ENCODE measurements at regions of chr3 and their contacts with region 1.

Region 1: DNA sequence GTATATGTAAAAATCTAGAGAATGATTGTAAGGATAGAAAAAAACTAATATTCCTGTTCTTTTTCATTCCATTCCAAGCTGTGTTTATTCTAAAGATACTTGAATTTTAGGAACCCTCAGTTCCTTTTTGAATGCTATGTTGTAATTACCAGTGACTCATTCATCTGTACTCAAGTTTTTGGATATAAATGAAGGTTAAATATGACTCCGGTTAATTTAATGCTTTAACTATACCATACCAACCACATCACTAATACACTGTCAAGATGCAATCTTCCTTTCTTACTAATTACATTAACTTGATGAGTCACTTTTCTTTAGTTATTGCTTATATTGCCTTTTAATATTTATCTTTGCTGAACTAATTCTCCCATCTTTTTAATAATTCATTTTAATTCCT is 68.8 kb upstream of the ZNF148 start:
- DNase-seq: no peak
- H3K4me3 ChIP-seq: no peak overlapping the region
- H3K4me3 Mint-ChIP-seq: no peak overlapping the region
- H3K27ac Mint-ChIP-seq: no peak overlapping the region
- H3K4me1 ChIP-seq: peaks cover 22% of the 10 kb centered on the region
- H3K4me1 Mint-ChIP-seq: peaks cover 5% of the 10 kb centered on the region
- H3K27me3 ChIP-seq: no peaks in the 10 kb centered on the region
- H3K27me3 Mint-ChIP-seq: no peaks in the 10 kb centered on the region
- CTCF ChIP-seq: no peak

Region 2: DNA sequence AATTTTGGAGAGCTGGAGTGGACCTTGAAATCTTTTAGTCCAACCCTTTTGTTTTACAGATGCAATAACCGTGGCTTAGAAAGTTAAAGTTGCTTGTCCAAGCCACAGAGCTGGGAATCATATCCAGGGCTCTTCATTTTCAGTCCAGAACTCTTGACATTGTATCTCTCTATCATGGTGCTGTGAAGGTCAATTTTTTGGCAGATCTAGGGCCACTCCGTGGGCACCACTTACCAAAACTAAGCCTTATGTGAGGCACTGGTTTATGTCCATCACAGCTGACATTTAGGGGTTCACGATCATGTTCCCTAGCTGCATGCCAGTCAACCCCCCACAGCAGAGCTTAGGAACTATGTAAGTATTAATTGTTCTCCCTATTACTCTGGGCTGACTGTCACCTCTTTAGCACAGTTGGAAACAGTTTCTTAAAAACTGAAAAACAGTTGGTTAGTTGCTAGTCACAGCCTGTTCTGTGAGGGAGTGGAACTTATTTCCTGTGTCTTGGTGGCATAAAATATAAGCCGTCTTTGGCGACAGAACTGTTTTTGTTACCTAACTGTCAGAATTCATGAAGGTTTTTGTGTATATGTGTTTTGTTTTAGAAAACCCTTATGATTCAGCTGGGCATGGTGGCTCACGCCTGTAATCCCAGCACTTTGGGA is 903.2 kb before region 1 on chr3:
- CTCF ChIA-PET with region 1: no interaction called
- POLR2A ChIA-PET with region 1: no interaction called
- intact Hi-C with region 1: no loop called
- DNase-seq: no peak
- H3K4me3 ChIP-seq: no peak overlapping the region
- H3K4me3 Mint-ChIP-seq: no peak overlapping the region
- H3K27ac Mint-ChIP-seq: no peak overlapping the region
- H3K4me1 ChIP-seq: no peaks in the 10 kb centered on the region
- H3K4me1 Mint-ChIP-seq: no peaks in the 10 kb centered on the region
- H3K27me3 ChIP-seq: no peaks in the 10 kb centered on the region
- H3K27me3 Mint-ChIP-seq: peaks cover 4% of the 10 kb centered on the region
- CTCF ChIP-seq: no peak

Region 3: GRCh38 chr3:125374996-125375941 is 68.7 kb before region 1 on chr3 and contains the start of gene ZNF148:
- CTCF ChIA-PET with region 1: no interaction called
- POLR2A ChIA-PET with region 1: interaction called, 5 read pairs
- intact Hi-C with region 1: loop called (anchors 5 kb)
- DNase-seq: peak; percentile 89 to 92
- H3K4me3 ChIP-seq: peak within 1 kb of the TSS; percentile 95
- H3K4me3 Mint-ChIP-seq: peak within 1 kb of the TSS; percentile 100
- H3K27ac Mint-ChIP-seq: peak within 1 kb of the TSS; percentile 98
- H3K4me1 ChIP-seq: peaks cover 30% of the 10 kb centered on the region
- H3K4me1 Mint-ChIP-seq: peaks cover 41% of the 10 kb centered on the region
- H3K27me3 ChIP-seq: no peaks in the 10 kb centered on the region
- H3K27me3 Mint-ChIP-seq: no peaks in the 10 kb centered on the region
- CTCF ChIP-seq: no peak
- total RNA-seq, gene ZNF148: 29.4 and 33.3 TPM in 2 replicates

Region 4: GRCh38 chr3:125460233-125460632 is 16.3 kb after region 1 on chr3:
- CTCF ChIA-PET with region 1: no interaction called
- POLR2A ChIA-PET with region 1: no interaction called
- intact Hi-C with region 1: no loop called
- DNase-seq: no peak
- H3K4me3 ChIP-seq: no peak overlapping the region
- H3K4me3 Mint-ChIP-seq: no peak overlapping the region
- H3K27ac Mint-ChIP-seq: no peak overlapping the region
- H3K4me1 ChIP-seq: peaks cover 8% of the 10 kb centered on the region
- H3K4me1 Mint-ChIP-seq: no peaks in the 10 kb centered on the region
- H3K27me3 ChIP-seq: no peaks in the 10 kb centered on the region
- H3K27me3 Mint-ChIP-seq: no peaks in the 10 kb centered on the region
- CTCF ChIP-seq: no peak

Region 5: DNA sequence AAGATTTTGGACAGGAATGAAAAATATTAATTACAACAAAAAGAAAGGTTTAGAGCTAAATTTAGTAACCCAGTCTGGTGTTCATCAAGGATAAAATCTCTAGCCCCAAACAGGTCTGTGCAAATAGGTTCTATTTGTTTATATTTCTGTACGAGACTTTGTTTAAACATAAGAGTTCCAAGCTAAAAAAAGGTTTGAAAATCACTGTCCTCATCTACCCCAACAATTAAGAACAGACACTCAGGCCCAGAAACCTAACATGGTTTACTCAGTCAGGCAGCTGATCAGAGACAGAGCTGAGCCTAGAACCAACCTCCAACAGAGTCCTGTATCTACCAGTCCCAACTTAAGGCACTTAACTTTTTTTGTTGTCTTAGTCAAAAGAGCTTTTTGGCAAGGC is 26.7 kb after region 1 on chr3:
- CTCF ChIA-PET with region 1: no interaction called
- POLR2A ChIA-PET with region 1: no interaction called
- intact Hi-C with region 1: no loop called
- DNase-seq: no peak
- H3K4me3 ChIP-seq: no peak overlapping the region
- H3K4me3 Mint-ChIP-seq: no peak overlapping the region
- H3K27ac Mint-ChIP-seq: no peak overlapping the region
- H3K4me1 ChIP-seq: no peaks in the 10 kb centered on the region
- H3K4me1 Mint-ChIP-seq: no peaks in the 10 kb centered on the region
- H3K27me3 ChIP-seq: no peaks in the 10 kb centered on the region
- H3K27me3 Mint-ChIP-seq: no peaks in the 10 kb centered on the region
- CTCF ChIP-seq: no peak

Region 6: DNA sequence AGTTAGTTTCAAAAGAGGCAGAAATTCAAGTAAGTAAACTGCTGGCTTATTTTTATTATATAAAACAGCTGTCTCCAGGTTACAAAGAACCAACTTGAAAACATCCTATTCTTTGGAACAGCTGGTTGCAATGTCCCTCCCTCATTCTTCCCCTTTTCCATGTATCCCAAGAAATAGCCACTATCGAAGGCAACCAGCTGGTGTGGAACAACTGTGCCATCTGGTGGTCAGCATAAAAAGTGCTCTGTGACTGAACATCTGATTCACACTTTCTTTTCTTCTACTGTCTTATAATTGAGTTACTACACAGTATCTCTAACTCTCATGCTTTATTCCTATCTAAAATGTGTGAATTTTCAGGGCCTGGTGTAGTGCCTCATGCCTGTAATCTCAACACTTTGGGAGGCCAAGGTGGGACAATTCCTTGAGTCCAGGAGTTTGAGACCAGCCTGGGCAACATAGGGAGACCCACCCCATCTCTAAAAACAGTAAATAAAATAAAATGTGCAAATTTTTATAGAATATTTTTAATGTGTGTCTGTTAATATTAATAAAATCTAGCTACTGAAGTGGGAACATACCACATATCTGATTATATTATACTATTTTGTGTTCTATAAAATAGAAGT is 141.8 kb after region 1 on chr3:
- CTCF ChIA-PET with region 1: no interaction called
- POLR2A ChIA-PET with region 1: no interaction called
- intact Hi-C with region 1: loop called (anchors 10 kb)
- DNase-seq: peak; percentile 56 to 66
- H3K4me3 ChIP-seq: no peak overlapping the region
- H3K4me3 Mint-ChIP-seq: no peak overlapping the region
- H3K27ac Mint-ChIP-seq: no peak overlapping the region
- H3K4me1 ChIP-seq: peaks cover 3% of the 10 kb centered on the region
- H3K4me1 Mint-ChIP-seq: peaks cover 7% of the 10 kb centered on the region
- H3K27me3 ChIP-seq: no peaks in the 10 kb centered on the region
- H3K27me3 Mint-ChIP-seq: no peaks in the 10 kb centered on the region
- CTCF ChIP-seq: peak; percentile 75 to 85

Measured in Caco-2 (cell line).